Endothelial cell of umbilical vein (primary cell): ENCODE measurements at regions of chr4 and their contacts with region 1.

Region 1: DNA sequence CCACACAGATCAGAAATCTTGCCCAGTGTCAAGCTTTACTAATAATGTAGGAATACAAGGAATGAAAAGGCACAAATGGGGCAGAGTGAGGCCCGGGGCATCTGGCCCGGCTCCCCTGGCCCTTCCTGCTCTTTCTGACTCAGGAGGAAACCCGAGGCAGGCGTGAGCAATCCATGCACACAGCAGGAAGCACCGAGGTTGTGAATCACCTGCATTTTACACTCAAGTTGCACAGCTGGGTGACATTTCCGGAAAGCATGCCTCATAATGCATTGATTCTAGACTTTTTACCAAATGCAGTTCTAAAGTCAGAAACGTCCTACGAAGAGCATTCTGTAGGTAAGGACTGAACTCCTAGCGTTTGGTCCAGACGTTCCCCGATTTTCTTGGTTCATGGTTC is 38.9 kb downstream of the PRIMPOL start:
- DNase-seq: peak; percentile 93
- H3K4me3 ChIP-seq: no peak overlapping the region
- H3K27ac ChIP-seq: peak overlapping the region; percentile 77
- H3K4me1 ChIP-seq: peaks cover 18% of the 10 kb centered on the region
- H3K27me3 ChIP-seq: no peaks in the 10 kb centered on the region
- CTCF ChIP-seq: no peak
- POLR2A ChIP-seq: peak; percentile 54

Region 2: GRCh38 chr4:184364100-184364921 is 324.1 kb before region 1 on chr4:
- CTCF ChIA-PET with region 1: no interaction called
- POLR2A ChIA-PET with region 1: no interaction called
- dilution Hi-C with region 1: no loop called
- intact Hi-C with region 1: no loop called
- DNase-seq: no peak
- H3K4me3 ChIP-seq: no peak overlapping the region
- H3K27ac ChIP-seq: no peak overlapping the region
- H3K4me1 ChIP-seq: no peaks in the 10 kb centered on the region
- H3K27me3 ChIP-seq: no peaks in the 10 kb centered on the region
- CTCF ChIP-seq: no peak
- POLR2A ChIP-seq: no peak

Region 3: DNA sequence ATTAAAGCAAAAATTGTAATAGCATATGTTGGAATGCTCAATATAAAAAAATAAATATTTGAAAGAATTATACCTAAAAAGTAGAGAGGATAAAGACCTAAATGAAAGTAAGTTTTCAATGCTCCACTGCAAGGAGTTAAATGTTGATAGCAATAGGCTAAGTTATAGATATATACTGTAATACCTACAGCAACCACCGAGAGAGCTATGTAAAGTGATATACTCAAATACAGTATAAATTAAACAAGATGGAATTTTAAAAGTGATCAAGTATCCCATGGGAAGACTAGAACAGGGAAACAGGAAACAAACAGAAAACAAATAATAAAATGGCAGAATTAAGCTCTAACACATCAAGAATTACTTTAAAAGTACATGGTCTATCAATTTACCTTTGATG is 113.1 kb before region 1 on chr4:
- CTCF ChIA-PET with region 1: no interaction called
- POLR2A ChIA-PET with region 1: no interaction called
- dilution Hi-C with region 1: no loop called
- intact Hi-C with region 1: loop called (anchors 1 kb)
- DNase-seq: peak; percentile 13
- H3K4me3 ChIP-seq: peak overlapping the region in 1 of 3 experiments; percentile 47
- H3K27ac ChIP-seq: peak overlapping the region; percentile 73
- H3K4me1 ChIP-seq: peaks cover 20% of the 10 kb centered on the region
- H3K27me3 ChIP-seq: no peaks in the 10 kb centered on the region
- CTCF ChIP-seq: no peak
- POLR2A ChIP-seq: no peak

Region 4: GRCh38 chr4:184728858-184729257 is 40.4 kb after region 1 on chr4:
- CTCF ChIA-PET with region 1: interaction called, 5 read pairs
- POLR2A ChIA-PET with region 1: no interaction called
- dilution Hi-C with region 1: no loop called
- intact Hi-C with region 1: loop called (anchors 1 kb)
- DNase-seq: peak; percentile 84
- H3K4me3 ChIP-seq: no peak overlapping the region
- H3K27ac ChIP-seq: peak overlapping the region; percentile 68
- H3K4me1 ChIP-seq: peaks cover 24% of the 10 kb centered on the region
- H3K27me3 ChIP-seq: no peaks in the 10 kb centered on the region
- CTCF ChIP-seq: no peak
- POLR2A ChIP-seq: no peak

Region 5: GRCh38 chr4:184733654-184734524 is 45.4 kb after region 1 on chr4 and contains the start of gene CENPU:
- CTCF ChIA-PET with region 1: interaction called, 5 read pairs
- POLR2A ChIA-PET with region 1: no interaction called
- dilution Hi-C with region 1: no loop called
- intact Hi-C with region 1: loop called (anchors 1 kb)
- DNase-seq: peak; percentile 99
- H3K4me3 ChIP-seq: peak within 1 kb of the TSS; percentile 75 to 91 (median 88)
- H3K27ac ChIP-seq: peak within 1 kb of the TSS; percentile 72
- H3K4me1 ChIP-seq: peaks cover 16% of the 10 kb centered on the region
- H3K27me3 ChIP-seq: no peaks in the 10 kb centered on the region
- CTCF ChIP-seq: no peak
- POLR2A ChIP-seq: peak; percentile 68
- total RNA-seq, gene CENPU: 35.6 and 37.9 TPM in 2 replicates